Gastrocnemius medialis (tissue), 4 donors: ENCODE measurements at regions of chr18 and their contacts with region 1.

Region 1: DNA sequence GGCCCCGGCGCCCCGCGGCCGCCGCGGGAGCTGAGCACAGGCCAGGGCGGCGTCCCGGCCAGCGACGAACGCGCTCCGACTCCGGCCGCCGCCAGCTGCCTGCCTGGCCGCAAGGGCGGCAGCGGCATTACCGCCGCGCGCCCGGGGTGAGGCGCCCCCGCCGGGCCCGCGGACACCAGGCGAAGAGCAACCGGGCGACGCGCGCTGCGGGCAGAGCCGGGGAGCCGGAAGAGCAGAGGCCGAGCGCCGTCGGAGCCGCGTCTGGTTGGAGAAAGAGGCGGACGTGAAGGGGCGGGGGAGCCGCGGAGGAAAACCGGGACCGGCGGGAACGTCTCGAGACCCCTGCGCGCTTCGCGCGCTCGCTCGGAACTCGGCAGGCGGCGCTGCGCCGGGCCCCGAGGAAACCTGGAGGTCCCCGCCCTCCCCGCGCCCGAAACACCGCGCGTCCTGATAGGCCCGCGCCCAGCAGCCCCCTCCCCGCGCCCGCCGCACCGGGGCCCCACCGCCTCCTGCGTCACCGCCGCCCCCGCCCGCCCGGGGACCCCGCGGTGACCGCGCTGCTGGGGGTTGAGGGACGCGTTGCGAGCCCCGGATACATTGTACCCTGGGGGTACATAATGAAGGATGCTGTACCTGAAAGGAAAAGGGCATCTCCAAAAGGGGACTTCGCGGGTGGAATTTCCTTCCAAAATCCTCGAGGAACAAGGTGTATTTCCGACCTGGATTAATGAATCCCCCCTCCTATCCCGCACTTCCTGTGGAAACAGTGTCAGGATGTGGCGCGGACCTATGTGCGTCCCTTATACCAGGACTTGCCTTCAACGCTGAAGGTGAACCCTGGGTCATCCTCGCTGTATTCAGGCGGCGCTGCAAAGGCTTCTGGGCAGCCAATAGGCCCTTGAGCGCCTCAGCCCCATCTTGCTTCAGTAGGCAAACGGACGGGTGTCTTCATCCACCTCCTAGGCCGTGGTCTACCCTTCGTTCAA is 1.0 kb upstream of the B4GALT6 start:
- DNase-seq: peak in 1 of 2 donors; percentile 29
- ATAC-seq: peak; percentile 86
- H3K4me3 ChIP-seq: peak overlapping the region; percentile 53 to 70 (median 60)
- H3K27ac ChIP-seq: peak overlapping the region; percentile 43 to 71 (median 52)
- H3K4me1 ChIP-seq: peaks cover 6 to 8% of the 10 kb centered on the region in 2 donors
- H3K27me3 ChIP-seq: no peaks in the 10 kb centered on the region
- CTCF ChIP-seq: peak in 4 of 5 experiments; percentile 16 to 64 (median 34)
- POLR2A ChIP-seq: peak; percentile 35 to 40

Region 2: DNA sequence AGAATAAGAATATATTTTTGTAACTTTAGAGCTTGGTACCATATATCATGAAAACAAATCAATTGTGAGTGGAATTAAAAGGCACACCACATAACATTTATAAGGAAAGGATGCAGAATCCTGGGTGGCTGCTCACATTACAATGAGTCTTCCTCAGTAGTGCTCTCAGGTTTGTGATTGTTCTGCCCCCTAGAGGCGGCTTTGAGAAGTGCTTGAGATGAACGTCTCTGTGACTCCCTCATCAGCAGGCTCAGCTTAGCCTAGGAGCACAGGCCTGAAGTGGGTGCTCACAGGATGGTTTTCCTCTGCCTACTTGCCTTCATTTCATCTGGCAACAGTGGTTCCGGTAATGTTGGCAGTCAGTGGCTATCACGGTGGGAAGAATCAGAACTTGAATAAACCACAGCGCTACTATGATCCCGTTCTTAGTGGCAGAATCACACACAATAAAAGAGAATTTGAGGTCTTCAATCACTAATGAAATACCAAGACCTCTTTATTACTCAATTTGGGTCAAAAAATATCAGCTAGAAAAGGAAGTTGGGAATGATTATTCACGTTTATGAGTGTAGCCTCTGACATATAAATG is 37.1 kb after region 1 on chr18:
- in situ Hi-C with region 1: no loop called
- intact Hi-C with region 1: loop called (anchors 1 kb)
- DNase-seq: peak; percentile 49 to 62
- ATAC-seq: peak; percentile 83 to 87
- H3K4me3 ChIP-seq: no peak overlapping the region
- H3K27ac ChIP-seq: no peak overlapping the region
- H3K4me1 ChIP-seq: peaks cover 5 to 16% of the 10 kb centered on the region in 2 donors
- H3K27me3 ChIP-seq: no peaks in the 10 kb centered on the region
- CTCF ChIP-seq: peak; percentile 48 to 84 (median 66)
- POLR2A ChIP-seq: no peak

Region 3: DNA sequence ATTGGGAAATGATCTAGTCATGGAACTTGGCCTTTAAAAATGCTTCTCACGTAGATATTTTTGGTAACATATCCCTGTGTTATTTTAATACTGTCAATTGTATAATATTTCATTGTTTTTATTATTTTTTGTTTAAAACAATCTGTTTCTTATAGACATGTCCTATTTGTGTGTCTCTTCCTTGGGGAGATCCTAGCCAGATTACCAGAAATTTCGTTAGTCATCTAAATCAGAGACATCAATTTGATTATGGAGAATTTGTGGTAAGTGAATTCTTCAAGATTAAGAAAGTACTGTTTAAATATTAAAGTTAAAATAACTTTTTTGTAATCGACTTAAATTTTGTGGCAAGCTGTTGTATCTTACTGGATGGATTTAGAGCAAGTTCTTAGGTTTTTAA is 441.1 kb after region 1 on chr18:
- in situ Hi-C with region 1: no loop called
- intact Hi-C with region 1: no loop called
- DNase-seq: no peak
- ATAC-seq: no peak
- H3K4me3 ChIP-seq: no peak overlapping the region
- H3K27ac ChIP-seq: no peak overlapping the region
- H3K4me1 ChIP-seq: no peaks in the 10 kb centered on the region
- H3K27me3 ChIP-seq: no peaks in the 10 kb centered on the region
- CTCF ChIP-seq: no peak
- POLR2A ChIP-seq: no peak